ENCODE measurements at regions of chr6 and their contacts with region 1.

Region 1: DNA sequence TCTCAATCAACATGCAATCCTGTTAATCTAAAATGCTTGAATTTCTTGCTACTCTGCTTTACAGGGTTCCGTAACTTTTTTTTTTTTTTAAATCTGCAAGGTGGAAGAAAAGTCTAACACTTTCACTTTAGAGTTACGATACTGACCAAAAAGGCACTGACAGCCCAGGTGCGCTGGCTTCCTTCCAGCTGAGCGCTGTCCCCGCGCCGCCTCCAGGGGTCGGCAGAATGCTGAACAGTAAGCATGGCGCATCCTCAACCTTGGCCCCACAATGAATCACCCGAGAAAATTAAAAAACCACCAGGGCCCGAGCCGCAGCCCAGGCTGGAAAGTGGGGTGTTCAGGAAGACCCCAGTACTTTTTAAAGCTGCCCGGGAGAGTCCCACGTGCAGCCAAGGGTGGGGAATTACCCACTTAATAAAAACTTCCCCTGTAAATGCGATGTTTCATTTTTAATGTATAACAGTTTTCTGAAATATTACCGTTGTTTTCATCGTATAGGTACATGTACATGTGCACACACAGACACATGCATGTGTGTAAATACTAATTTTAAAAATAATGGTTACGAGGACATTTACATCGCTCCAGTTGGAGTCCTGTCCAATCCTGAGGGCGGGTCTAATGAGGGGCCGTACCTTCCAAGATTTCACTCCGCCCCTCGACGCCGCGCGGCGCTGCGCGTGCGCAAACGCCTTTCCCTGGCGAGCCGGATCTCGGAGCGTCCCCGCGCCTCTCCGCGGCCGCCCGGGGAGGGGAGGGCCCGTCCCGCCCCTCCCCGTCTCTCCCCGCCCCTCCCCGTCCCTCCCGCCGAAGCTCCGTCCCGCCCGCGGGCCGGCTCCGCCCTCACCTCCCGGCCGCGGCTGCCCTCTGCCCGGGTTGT is at the start of gene GINM1:
- DNase-seq: peak; percentile 97
- ATAC-seq: peak; percentile 90
- H3K4me3 Mint-ChIP-seq: peak within 1 kb of the TSS; percentile 91
- H3K27ac Mint-ChIP-seq: peak within 1 kb of the TSS; percentile 89
- H3K4me1 Mint-ChIP-seq: peaks cover 20% of the 10 kb centered on the region
- H3K27me3 Mint-ChIP-seq: no peaks in the 10 kb centered on the region
- total RNA-seq, gene GINM1: 15.9 to 17.3 TPM

Region 2: DNA sequence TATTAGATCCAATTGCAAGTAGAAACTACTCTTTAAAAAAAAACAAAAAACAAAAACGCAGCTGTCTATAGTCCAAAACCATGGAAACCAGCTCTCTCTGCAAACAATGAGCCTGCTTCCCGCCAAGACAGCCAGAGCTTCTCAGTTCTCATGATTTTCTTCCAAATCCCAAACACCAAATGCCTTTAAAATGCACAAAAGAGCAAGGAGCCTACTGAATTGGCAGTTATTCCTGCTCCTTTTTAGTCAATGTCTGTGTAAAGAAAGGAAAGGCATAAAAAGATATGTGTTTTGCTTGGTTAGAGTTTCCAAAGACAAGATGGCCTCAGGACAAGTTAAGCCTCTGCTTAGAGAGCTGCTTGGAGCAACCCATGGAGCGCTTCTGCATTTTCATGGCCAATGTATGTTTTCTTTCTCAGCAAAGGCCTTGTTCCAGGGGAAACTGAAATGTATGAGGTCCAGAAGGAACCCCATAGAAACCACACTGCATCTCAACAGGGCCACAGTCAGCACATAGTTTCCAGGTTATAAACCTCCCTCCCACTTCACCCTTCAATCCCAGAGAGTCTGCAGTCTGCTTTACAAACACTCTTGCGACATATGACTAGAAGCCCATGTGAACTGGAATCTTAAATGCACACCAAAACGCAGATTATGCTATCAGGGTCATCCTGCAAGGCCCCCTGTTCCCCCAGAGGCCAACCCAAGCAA is 457.6 kb before region 1 on chr6:
- CTCF ChIA-PET with region 1: no interaction called
- POLR2A ChIA-PET with region 1: no interaction called
- intact Hi-C with region 1: no loop called
- DNase-seq: no peak
- ATAC-seq: no peak
- H3K4me3 Mint-ChIP-seq: no peak overlapping the region
- H3K27ac Mint-ChIP-seq: no peak overlapping the region
- H3K4me1 Mint-ChIP-seq: peaks cover 17% of the 10 kb centered on the region
- H3K27me3 Mint-ChIP-seq: no peaks in the 10 kb centered on the region

Region 3: GRCh38 chr6:149551920-149552319 is 13.8 kb before region 1 on chr6:
- CTCF ChIA-PET with region 1: interaction called, 58 read pairs
- POLR2A ChIA-PET with region 1: no interaction called
- intact Hi-C with region 1: no loop called
- DNase-seq: no peak
- ATAC-seq: no peak
- H3K4me3 Mint-ChIP-seq: no peak overlapping the region
- H3K27ac Mint-ChIP-seq: no peak overlapping the region
- H3K4me1 Mint-ChIP-seq: peaks cover 5% of the 10 kb centered on the region
- H3K27me3 Mint-ChIP-seq: peaks cover 8% of the 10 kb centered on the region

Region 4: DNA sequence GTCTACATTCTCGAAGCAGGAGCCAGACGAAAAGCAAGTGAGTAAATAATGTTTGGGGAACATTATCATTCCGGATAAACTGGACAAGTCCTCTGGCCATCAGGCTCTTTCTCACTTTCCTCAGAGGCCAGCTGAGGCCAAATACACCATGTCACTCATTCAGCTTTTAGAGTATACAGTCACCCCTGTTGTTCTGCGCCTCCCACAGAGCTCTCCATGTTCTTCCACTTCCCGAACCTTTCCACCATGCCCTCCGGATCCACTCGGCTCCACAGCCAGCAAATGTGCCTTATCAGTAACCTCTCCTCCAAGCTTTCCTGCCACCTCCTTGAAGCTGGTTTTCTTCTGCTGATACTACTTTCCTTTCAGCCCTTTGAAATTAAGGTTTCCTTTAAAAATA is 120.5 kb after region 1 on chr6:
- CTCF ChIA-PET with region 1: interaction called, 4 read pairs
- POLR2A ChIA-PET with region 1: no interaction called
- intact Hi-C with region 1: loop called in 1 of 2 experiments (anchors 1 kb)
- DNase-seq: no peak
- ATAC-seq: no peak
- H3K4me3 Mint-ChIP-seq: no peak overlapping the region
- H3K27ac Mint-ChIP-seq: peak overlapping the region; percentile 5
- H3K4me1 Mint-ChIP-seq: peaks cover 28% of the 10 kb centered on the region
- H3K27me3 Mint-ChIP-seq: no peaks in the 10 kb centered on the region

Region 5: GRCh38 chr6:149746147-149746946 is 180.6 kb after region 1 on chr6 and contains the start of gene NUP43:
- CTCF ChIA-PET with region 1: no interaction called
- POLR2A ChIA-PET with region 1: no interaction called
- intact Hi-C with region 1: loop called (anchors 1 to 2 kb)
- DNase-seq: peak; percentile 96
- ATAC-seq: peak; percentile 67
- H3K4me3 Mint-ChIP-seq: peak within 1 kb of the TSS; percentile 98
- H3K27ac Mint-ChIP-seq: peak within 1 kb of the TSS; percentile 96
- H3K4me1 Mint-ChIP-seq: peaks cover 27% of the 10 kb centered on the region
- H3K27me3 Mint-ChIP-seq: no peaks in the 10 kb centered on the region
- total RNA-seq, gene NUP43: 80.5 to 89.4 TPM

Region 6: DNA sequence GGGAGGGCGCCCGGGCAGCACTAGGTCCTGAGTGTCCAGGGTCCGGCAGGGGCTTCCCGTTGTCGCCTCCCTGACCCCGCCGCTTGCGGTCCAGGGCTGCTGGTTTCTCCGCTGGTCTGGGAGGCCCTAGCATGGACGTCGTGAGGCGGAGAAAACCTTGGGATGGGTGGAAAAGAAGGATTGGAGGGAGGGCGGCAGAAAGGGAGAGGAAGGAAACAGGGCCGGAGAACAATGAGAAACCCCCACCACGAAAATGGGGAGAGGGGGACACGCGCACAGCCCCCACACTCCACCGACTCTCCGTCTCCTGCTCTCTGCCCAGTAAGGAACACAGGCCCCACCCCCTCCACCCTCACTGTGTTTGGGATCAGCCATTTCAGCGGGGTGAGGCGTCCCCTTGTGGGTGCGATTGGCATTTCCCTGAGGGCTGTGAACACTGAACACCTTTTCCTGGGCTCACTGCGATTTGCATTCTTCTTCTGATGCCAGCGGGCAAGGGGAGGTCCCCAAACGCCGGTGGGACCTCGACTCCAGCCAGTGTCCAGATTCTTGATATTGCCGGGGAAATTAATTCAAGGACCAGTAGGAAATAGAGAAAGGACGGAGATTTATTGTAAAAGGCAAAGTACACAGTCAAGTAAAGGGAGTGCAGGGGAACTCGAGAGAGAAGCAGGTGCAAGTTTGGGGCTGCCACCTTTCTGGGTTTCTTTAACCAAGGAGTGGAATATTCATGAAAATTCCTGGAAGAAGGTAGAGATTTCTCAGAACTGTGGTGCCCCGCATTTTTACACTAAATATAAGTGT is 360.4 kb after region 1 on chr6:
- CTCF ChIA-PET with region 1: no interaction called
- POLR2A ChIA-PET with region 1: no interaction called
- intact Hi-C with region 1: loop called in 1 of 2 experiments (anchors 1 kb)
- DNase-seq: peak; percentile 93
- ATAC-seq: peak; percentile 83
- H3K4me3 Mint-ChIP-seq: peak overlapping the region; percentile 47
- H3K27ac Mint-ChIP-seq: no peak overlapping the region
- H3K4me1 Mint-ChIP-seq: peaks cover 21% of the 10 kb centered on the region
- H3K27me3 Mint-ChIP-seq: peaks cover 80% of the 10 kb centered on the region

Region 7: DNA sequence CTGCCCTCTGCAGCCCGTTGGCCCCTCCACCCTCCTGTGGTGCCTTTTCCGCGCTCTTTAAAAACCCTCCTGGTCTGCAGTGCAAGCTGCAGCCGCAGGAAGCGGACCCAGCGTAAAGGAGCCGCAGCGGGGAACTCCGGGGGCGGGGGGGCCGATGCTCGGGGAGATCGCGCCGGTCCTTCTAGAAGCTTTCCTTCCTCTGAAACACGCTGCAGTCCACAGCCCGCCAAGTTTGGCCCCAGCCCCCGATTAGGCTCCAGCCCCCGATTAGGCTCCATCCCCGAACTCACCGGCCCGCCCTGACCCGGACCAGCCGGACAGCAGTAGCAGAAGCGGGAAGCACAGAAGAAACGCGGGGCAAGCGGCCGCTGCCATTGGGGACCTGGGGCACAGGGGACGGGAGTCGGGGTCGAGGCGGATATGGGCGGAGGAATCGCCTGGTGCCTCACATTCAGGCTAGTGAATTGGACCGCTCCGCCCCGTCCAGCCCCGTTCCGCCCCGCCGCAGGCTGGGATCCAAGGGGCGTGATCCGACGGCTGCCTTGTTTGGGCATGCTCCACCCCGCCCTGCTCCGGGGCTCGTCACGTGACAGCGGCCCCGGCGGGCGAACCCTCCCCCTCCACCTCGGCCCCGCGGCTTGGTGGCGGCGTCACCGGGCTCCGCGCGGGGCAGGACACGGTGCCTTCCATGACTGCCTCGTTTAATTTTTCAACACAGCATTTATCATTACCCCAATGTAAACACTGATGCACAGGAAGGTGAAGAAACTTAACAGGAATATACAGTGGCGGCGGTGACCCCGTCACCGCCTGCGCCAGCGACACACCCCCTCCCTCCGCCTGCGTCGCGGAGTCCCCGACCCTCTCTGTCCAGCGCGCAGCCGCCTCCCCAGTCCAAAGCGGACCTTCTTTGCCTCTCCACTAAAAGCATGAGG is 439.3 kb after region 1 on chr6:
- CTCF ChIA-PET with region 1: no interaction called
- POLR2A ChIA-PET with region 1: no interaction called
- intact Hi-C with region 1: loop called in 1 of 2 experiments (anchors 5 kb)
- DNase-seq: peak; percentile 93
- ATAC-seq: peak; percentile 74
- H3K4me3 Mint-ChIP-seq: peak overlapping the region; percentile 75
- H3K27ac Mint-ChIP-seq: no peak overlapping the region
- H3K4me1 Mint-ChIP-seq: peaks cover 59% of the 10 kb centered on the region
- H3K27me3 Mint-ChIP-seq: peaks cover 30% of the 10 kb centered on the region

Region 8: GRCh38 chr6:151451950-151452749 is 1886.4 kb after region 1 on chr6 and contains the start of gene RMND1:
- CTCF ChIA-PET with region 1: no interaction called
- POLR2A ChIA-PET with region 1: no interaction called
- intact Hi-C with region 1: loop called in 1 of 2 experiments (anchors 5 kb)
- DNase-seq: peak; percentile 100
- ATAC-seq: peak; percentile 98
- H3K4me3 Mint-ChIP-seq: peak within 1 kb of the TSS; percentile 96
- H3K27ac Mint-ChIP-seq: peak within 1 kb of the TSS; percentile 85
- H3K4me1 Mint-ChIP-seq: peaks cover 30% of the 10 kb centered on the region
- H3K27me3 Mint-ChIP-seq: no peaks in the 10 kb centered on the region
- total RNA-seq, gene RMND1: 20.8 to 21.5 TPM

Measured in activated CD4-positive, alpha-beta T cell treated with anti-CD3 and anti-CD28 coated beads for 36 hours (primary cell).